Ovary (tissue), 10 donors: ENCODE measurements at regions of chr6 and their contacts with region 1.

Region 1: DNA sequence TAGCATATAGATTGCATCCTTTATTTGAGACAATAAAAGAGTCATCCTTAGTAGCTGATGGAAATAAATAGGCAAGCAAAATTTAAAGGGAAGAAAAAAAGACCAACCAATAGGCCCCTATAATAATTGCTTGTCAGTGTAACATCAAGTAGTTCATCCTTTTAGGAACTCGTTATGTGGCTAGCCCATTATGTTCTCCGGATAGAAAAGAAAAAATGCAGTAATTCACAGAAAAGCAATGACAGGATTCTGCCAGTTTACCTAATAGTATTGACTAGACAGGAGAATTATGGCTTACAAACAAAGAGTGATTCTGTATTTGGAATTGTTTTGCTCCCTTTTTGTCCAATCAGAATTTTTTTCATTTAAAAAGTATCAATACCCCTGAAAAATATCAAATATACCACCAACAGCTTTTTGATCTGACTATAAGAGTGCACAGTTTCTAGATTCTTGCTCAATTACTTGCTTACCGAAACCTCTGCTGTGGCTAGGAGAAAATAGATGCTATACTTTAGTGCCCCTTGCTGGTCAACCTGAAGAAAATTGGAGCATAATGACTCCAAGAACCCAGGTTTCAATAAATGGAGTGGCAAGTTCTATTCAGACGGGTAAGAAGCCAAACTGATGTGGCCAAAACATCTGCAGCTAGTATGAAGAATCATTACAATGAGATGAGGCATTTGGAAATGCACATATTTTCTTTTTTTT is 91.5 kb upstream of the SASH1 start:
- DNase-seq: no peak
- H3K4me3 ChIP-seq: no peak overlapping the region
- H3K27ac ChIP-seq: no peak overlapping the region
- H3K4me1 ChIP-seq: no peaks in the 10 kb centered on the region
- H3K27me3 ChIP-seq: no peaks in the 10 kb centered on the region
- CTCF ChIP-seq: peak in 2 of 3 donors; percentile 42 to 52
- EP300 ChIP-seq: no peak
- POLR2A ChIP-seq: no peak

Region 2: DNA sequence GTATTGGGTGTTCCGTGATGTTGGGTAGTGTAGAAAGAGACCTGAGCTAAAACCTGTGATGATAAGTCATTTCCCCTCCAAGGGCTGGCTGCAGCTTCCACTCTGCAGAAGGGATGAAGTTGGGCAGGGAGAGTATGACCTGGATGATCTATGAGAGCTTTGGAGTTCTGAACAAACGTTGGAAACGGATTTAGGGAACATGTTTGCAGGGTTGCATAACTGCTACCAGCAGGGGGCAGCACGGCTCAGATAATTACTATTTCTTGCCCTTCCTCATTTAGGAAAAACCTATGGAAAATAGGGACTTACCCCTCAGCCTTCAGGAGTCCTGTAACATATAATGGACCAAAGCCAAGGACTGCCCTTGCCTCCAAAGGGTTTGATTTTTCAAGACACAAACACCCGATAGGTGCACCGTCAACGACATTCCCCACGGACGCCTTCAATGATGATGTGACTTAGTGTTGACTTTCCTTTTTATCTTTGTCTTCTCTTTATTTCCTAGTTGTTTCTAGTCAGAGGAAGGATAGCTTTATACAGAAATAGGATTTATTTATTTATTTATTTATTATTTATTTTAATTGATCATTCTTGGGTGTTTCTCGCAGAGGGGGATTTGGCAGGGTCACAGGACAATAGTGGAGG is 73.4 kb before region 1 on chr6:
- intact Hi-C with region 1: loop called in 2 of 4 experiments (anchors 5 kb)
- DNase-seq: peak; percentile 39 to 70 (median 67)
- H3K4me3 ChIP-seq: no peak overlapping the region
- H3K27ac ChIP-seq: no peak overlapping the region
- H3K4me1 ChIP-seq: no peaks in the 10 kb centered on the region
- H3K27me3 ChIP-seq: no peaks in the 10 kb centered on the region
- CTCF ChIP-seq: peak; percentile 17 to 75 (median 70)
- EP300 ChIP-seq: no peak
- POLR2A ChIP-seq: no peak